Naive thymus-derived CD4-positive, alpha-beta T cell (primary cell): ENCODE measurements at regions of chr16 and their contacts with region 1.

Region 1: GRCh38 chr16:46853713-46854443 is 22.9 kb upstream of the C16orf87 start:
- DNase-seq: peak in 8 of 9 donors; percentile 14 to 57 (median 38)
- ATAC-seq: peak; percentile 67
- H3K4me3 ChIP-seq: no peak overlapping the region
- H3K4me3 Mint-ChIP-seq: no peak overlapping the region
- H3K27ac ChIP-seq: no peak overlapping the region
- H3K27ac Mint-ChIP-seq: no peak overlapping the region
- H3K4me1 ChIP-seq: no peaks in the 10 kb centered on the region
- H3K4me1 Mint-ChIP-seq: peaks cover 0 to 8% (median 0%) of the 10 kb centered on the region in 7 donors
- H3K27me3 ChIP-seq: no peaks in the 10 kb centered on the region
- H3K27me3 Mint-ChIP-seq: peaks cover 0 to 10% (median 0%) of the 10 kb centered on the region in 5 donors

Region 2: GRCh38 chr16:46908540-46909372 is 54.9 kb after region 1 on chr16:
- CTCF ChIA-PET with region 1: interaction called, 73 read pairs
- POLR2A ChIA-PET with region 1: no interaction called
- intact Hi-C with region 1: loop called (anchors 1 kb)
- DNase-seq: peak; percentile 23 to 57 (median 47)
- ATAC-seq: peak; percentile 60
- H3K4me3 ChIP-seq: no peak overlapping the region
- H3K4me3 Mint-ChIP-seq: no peak overlapping the region
- H3K27ac ChIP-seq: no peak overlapping the region
- H3K27ac Mint-ChIP-seq: peak overlapping the region in 1 of 9 donors; percentile 35
- H3K4me1 ChIP-seq: no peaks in the 10 kb centered on the region
- H3K4me1 Mint-ChIP-seq: peaks cover 0 to 17% (median 0%) of the 10 kb centered on the region in 7 donors
- H3K27me3 ChIP-seq: no peaks in the 10 kb centered on the region
- H3K27me3 Mint-ChIP-seq: no peaks in the 10 kb centered on the region

Region 3: DNA sequence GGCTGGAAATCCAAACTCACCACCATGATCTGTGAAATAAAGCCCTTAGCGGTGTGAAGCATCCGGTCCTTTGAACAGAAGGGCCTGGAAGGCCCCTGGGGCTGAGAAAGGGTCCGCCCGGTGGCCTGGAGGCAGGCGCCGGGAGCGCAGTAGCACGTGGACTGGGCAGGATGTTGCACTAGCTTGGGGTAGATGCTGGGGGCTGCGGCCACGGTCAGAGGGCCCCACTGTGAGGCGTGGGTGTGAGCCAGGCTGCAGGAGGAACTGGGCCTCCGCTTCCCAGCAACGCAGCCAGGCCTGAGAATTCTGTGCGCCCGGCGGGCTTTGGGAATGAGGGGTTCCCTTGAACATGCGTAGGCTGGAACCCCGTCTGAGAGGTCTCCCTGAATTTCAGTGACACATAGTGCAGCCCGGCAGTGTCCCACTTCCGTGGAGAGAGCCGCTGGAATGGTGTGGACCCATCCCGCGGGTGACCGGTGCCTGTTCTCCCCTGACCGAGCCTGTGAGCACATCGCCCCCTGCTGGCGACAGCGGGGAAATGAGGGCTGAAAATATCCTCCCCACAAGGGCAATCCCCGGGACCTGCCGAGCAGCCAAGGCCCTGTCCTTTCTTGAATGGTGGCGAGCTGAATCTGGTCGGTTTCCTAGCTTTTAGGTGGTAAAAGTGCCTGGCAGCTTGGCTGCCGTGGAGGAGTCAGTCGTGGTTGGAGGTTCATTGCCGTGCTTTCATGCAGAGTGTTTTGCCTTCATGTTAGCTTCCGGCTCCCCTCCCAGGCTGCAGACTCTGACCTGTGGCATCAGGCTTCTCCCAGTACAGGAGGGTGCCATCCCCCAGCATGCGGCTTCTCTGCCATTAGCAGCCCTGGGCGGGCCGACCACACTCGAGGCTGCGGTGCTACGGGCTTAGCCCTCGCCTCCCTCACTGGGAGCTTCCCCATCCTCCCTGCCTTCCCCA is 75.8 kb after region 1 on chr16:
- CTCF ChIA-PET with region 1: no interaction called
- POLR2A ChIA-PET with region 1: no interaction called
- intact Hi-C with region 1: loop called (anchors 1 kb)
- DNase-seq: peak; percentile 15 to 73 (median 38)
- ATAC-seq: peak; percentile 83
- H3K4me3 ChIP-seq: no peak overlapping the region
- H3K4me3 Mint-ChIP-seq: no peak overlapping the region
- H3K27ac ChIP-seq: no peak overlapping the region
- H3K27ac Mint-ChIP-seq: no peak overlapping the region
- H3K4me1 ChIP-seq: no peaks in the 10 kb centered on the region
- H3K4me1 Mint-ChIP-seq: peaks cover 0 to 5% (median 0%) of the 10 kb centered on the region in 7 donors
- H3K27me3 ChIP-seq: no peaks in the 10 kb centered on the region
- H3K27me3 Mint-ChIP-seq: no peaks in the 10 kb centered on the region

Region 4: GRCh38 chr16:48156790-48157209 is 1302.9 kb after region 1 on chr16:
- CTCF ChIA-PET with region 1: no interaction called
- POLR2A ChIA-PET with region 1: no interaction called
- intact Hi-C with region 1: loop called in 1 of 2 experiments (anchors 2 kb)
- DNase-seq: peak; percentile 33 to 89 (median 69)
- ATAC-seq: peak; percentile 88
- H3K4me3 ChIP-seq: no peak overlapping the region
- H3K4me3 Mint-ChIP-seq: no peak overlapping the region
- H3K27ac ChIP-seq: no peak overlapping the region
- H3K27ac Mint-ChIP-seq: no peak overlapping the region
- H3K4me1 ChIP-seq: no peaks in the 10 kb centered on the region
- H3K4me1 Mint-ChIP-seq: peaks cover 0 to 23% (median 0%) of the 10 kb centered on the region in 7 donors
- H3K27me3 ChIP-seq: no peaks in the 10 kb centered on the region
- H3K27me3 Mint-ChIP-seq: peaks cover 0 to 41% (median 9%) of the 10 kb centered on the region in 5 donors

Region 5: DNA sequence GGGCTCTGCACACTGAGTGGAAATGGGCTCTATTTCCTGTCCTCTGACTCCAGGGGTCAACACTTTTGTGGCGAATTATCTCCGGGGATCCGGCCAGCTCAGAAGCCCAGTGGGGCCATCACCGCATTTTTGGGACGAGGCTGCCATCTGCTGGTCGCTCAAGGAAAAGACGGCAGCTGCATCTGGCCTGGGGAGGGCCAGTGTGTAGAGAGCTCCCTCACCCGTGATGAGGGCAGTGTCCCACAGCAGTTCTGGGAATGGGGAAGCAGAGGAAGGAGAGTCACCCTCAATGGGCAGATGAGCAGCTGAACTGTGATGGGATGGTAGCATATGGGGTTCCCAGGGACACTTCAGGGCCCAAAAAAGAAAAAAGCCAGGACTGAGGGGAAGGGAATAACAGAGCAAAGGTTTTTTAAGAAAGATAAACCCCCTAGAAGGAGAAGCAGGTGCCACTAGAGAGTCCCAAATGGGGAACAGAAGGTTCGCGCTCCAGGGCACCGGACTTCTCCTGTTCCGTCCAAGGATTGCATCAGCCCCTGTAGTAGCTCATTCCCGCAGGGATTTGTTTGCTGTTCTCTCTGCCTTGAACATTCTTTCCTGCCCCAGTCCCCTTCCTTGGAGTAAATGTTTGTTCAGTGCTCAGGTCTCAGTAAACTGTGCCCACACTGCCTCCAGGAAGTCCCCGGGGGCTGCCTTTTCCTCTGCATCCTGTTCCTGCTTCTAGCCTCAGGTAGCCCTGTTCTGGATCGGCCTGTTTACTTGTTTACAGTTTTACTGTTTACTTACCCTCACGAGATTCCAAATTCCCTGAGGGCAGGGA is 1311.2 kb after region 1 on chr16:
- CTCF ChIA-PET with region 1: no interaction called
- POLR2A ChIA-PET with region 1: interaction called, 4 read pairs
- intact Hi-C with region 1: loop called (anchors 1 to 2 kb)
- DNase-seq: peak; percentile 20 to 71 (median 45)
- ATAC-seq: peak; percentile 87
- H3K4me3 ChIP-seq: no peak overlapping the region
- H3K4me3 Mint-ChIP-seq: peak overlapping the region in 1 of 10 donors; percentile 32
- H3K27ac ChIP-seq: no peak overlapping the region
- H3K27ac Mint-ChIP-seq: peak overlapping the region in 2 of 9 donors; percentile 50 to 88
- H3K4me1 ChIP-seq: no peaks in the 10 kb centered on the region
- H3K4me1 Mint-ChIP-seq: peaks cover 0 to 8% (median 4%) of the 10 kb centered on the region in 7 donors
- H3K27me3 ChIP-seq: no peaks in the 10 kb centered on the region
- H3K27me3 Mint-ChIP-seq: peaks cover 4 to 8% (median 4%) of the 10 kb centered on the region in 5 donors